ENCODE measurements at regions of chr9 and their contacts with region 1.

Region 1: DNA sequence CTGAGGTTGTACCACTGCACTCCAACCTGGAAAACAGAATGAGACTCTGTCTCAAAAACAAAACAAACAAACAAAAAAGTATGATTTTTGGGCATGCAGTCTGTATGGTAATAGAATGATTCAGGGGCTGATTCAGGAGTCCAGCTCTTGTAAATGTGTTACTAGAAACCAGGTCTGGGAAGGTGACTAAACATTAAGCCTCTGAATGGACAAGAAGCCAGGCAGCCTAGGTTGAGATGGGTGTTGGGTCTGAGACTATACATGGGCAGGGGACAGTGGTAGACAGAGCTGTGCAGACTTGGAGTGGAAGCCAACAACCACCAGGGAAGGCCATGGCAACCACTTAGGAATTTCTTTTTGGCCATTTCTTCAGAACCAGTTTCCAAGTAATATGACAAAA is 64.9 kb upstream of the TLE1 start:
- DNase-seq: no peak
- ATAC-seq: no peak
- H3K4me3 ChIP-seq: no peak overlapping the region
- H3K4me3 Mint-ChIP-seq: no peak overlapping the region
- H3K27ac ChIP-seq: no peak overlapping the region
- H3K27ac Mint-ChIP-seq: no peak overlapping the region
- H3K4me1 ChIP-seq: no peaks in the 10 kb centered on the region
- H3K4me1 Mint-ChIP-seq: no peaks in the 10 kb centered on the region
- H3K27me3 ChIP-seq: no peaks in the 10 kb centered on the region
- H3K27me3 Mint-ChIP-seq: no peaks in the 10 kb centered on the region

Region 2: DNA sequence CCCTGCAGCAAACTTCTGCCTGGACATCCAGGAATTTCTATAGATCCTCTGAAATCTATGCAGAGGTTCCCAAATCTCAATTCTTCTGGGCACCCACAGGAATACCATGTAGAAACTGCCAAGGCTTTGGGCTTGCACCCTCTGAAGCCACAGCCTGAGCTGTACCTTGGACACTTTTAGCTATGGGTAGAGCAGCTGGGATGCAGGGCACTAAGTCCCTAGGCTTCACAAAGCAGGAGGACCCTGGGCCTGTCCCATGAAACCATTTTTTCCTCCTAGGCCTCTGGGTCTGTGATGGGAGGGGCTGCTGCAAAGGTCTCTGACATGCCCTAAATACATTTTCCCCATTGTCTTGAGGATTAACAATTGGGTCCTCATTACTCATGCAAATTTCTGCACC is 201.4 kb after region 1 on chr9:
- CTCF ChIA-PET with region 1: no interaction called
- POLR2A ChIA-PET with region 1: no interaction called
- DNase-seq: no peak
- ATAC-seq: no peak
- H3K4me3 ChIP-seq: no peak overlapping the region
- H3K4me3 Mint-ChIP-seq: no peak overlapping the region
- H3K27ac ChIP-seq: no peak overlapping the region
- H3K27ac Mint-ChIP-seq: no peak overlapping the region
- H3K4me1 ChIP-seq: no peaks in the 10 kb centered on the region
- H3K4me1 Mint-ChIP-seq: no peaks in the 10 kb centered on the region
- H3K27me3 ChIP-seq: no peaks in the 10 kb centered on the region
- H3K27me3 Mint-ChIP-seq: no peaks in the 10 kb centered on the region

Region 3: DNA sequence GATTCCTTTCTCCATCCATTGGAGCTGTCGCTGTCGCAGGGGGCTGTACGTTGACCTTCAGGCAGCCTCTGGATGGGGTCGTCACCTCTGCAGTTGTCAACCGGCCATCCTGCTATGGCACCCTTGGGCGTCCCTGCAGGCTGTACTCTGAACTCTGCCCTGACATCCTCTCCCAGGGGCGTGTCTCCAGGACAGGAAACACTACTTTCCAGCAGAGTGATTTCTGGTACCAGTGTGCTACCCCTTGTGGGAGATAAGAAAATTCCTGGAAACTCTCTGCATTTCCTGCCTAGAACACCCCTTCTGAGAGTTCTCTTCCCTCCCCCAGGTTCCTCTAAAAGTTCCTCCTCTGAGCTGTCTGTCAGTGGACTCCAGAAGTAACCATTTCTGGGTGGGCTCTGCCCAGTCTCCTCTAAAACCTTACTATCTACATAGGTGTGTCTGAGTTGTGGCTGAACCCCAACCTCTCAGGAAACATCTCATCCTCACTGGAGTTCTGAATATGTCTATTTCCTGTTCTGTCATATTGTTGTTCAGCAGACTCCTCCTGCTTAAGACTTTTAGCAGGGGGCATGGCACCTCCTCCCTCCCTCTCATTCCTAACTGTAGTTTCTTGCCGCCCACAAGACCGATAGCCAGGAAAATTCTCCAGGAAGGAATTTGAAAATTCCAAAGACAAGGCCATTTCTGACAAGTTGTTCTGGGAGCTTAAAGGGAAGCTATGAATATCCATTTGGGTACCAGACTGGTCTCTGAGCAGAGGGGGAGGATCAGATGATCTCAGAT is 1454.0 kb after region 1 on chr9:
- CTCF ChIA-PET with region 1: no interaction called
- POLR2A ChIA-PET with region 1: interaction called in 1 of 2 experiments, 10 read pairs
- DNase-seq: no peak
- ATAC-seq: no peak
- H3K4me3 ChIP-seq: no peak overlapping the region
- H3K4me3 Mint-ChIP-seq: no peak overlapping the region
- H3K27ac ChIP-seq: no peak overlapping the region
- H3K27ac Mint-ChIP-seq: no peak overlapping the region
- H3K4me1 ChIP-seq: no peaks in the 10 kb centered on the region
- H3K4me1 Mint-ChIP-seq: no peaks in the 10 kb centered on the region
- H3K27me3 ChIP-seq: no peaks in the 10 kb centered on the region
- H3K27me3 Mint-ChIP-seq: peaks cover 0 to 5% of the 10 kb centered on the region in 2 donors

Measured in T-cell (primary cell).